ENCODE measurements at regions of chr11 and their contacts with region 1.

Region 1: GRCh38 chr11:123407130-123407995 is 22.7 kb upstream of the GRAMD1B start:
- DNase-seq: peak; percentile 76
- H3K4me3 Mint-ChIP-seq: peak overlapping the region; percentile 33
- H3K27ac Mint-ChIP-seq: no peak overlapping the region
- H3K4me1 Mint-ChIP-seq: peaks cover 35% of the 10 kb centered on the region
- H3K27me3 Mint-ChIP-seq: peaks cover 9% of the 10 kb centered on the region

Region 2: DNA sequence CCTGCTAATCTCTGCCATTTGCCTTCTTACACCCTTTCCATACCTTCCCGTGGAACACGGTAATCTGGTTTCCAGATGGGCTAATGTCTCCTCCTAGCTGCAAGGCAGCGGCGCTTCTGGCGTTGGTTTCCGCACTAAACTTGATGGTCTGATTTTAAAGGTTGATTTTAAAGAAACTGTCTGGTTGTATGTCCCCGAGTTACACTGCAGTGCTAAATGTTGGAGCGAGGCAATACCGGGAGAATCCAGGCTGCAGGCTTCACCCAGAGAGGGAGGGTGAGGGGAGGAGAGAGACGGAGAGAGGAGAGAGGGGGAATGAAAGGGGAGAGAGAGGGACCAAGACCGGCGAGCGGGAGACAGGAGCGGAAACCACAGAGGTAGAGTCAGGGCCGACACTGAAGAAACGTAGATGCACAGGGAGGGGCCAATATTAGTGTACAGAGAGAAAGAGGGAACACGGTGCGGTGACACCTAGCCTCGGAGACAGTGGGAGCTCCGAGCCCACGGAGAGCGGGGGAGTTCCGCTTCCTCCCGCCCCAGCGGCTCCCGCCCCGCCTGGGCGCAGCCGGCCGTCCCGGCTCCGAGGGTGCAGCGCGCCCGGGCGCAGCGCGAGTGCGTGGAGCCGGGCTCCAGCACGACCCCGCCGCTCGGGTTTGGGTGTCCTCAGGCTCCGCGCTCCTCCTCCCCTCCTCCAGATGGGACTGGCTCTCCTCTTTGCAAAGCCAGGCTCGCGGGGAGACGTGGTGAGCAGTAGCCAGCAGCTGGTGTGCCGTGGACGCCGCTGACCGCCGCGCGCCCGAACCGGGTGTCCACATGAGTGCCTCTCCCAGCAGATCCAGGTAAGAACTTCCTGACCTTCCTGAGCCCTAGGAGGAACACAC is 49.2 kb before region 1 on chr11:
- CTCF ChIA-PET with region 1: interaction called, 14 read pairs
- DNase-seq: peak; percentile 66
- H3K4me3 Mint-ChIP-seq: peak overlapping the region; percentile 81
- H3K27ac Mint-ChIP-seq: peak overlapping the region; percentile 78
- H3K4me1 Mint-ChIP-seq: peaks cover 51% of the 10 kb centered on the region
- H3K27me3 Mint-ChIP-seq: peaks cover 42% of the 10 kb centered on the region

Region 3: DNA sequence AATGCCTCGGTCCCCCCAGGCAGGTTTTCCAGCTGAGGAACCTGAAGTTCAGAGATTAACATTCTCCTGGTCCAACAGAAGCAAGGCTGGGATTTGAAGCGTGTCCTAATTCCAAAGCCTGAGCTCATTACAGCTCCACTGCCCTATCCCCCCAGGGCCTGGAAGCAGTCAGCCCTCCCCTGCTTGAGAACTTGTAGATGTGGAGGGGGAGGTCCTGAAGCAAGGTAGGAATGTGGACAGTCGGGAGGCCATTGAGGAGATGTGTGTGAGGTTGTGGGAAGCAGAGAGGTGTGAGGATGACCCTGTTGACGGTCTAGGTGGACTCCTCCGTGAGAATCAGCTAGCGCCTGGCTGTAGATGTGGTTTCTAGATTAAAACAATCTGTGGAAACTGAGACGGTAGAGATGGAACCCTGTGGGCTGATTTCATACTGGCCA is 30.8 kb after region 1 on chr11:
- CTCF ChIA-PET with region 1: interaction called, 86 read pairs
- DNase-seq: no peak
- H3K4me3 Mint-ChIP-seq: no peak overlapping the region
- H3K27ac Mint-ChIP-seq: peak overlapping the region; percentile 62
- H3K4me1 Mint-ChIP-seq: peaks cover 86% of the 10 kb centered on the region
- H3K27me3 Mint-ChIP-seq: no peaks in the 10 kb centered on the region

Region 4: DNA sequence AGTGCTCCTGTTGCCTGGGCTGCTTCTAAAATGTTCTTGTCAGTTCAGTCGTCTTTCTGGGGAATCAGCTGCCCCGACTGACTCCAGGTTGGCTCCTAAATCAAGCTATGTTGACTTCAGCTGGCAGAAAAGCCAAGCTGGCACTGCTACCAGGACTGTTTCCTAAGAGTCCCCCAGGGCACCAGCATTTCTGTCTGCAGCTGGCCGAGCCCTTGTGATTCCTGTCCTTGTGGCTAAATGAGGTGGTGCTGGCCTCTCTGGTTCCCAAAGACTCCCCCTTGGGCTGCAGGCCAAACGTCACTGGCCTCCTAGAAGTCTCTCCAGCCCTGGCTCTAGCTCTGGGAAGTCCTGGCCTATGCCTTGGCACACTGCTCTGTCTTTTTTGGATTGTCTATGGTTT is 53.8 kb after region 1 on chr11:
- CTCF ChIA-PET with region 1: interaction called, 10 read pairs
- DNase-seq: no peak
- H3K4me3 Mint-ChIP-seq: no peak overlapping the region
- H3K27ac Mint-ChIP-seq: no peak overlapping the region
- H3K4me1 Mint-ChIP-seq: peaks cover 37% of the 10 kb centered on the region
- H3K27me3 Mint-ChIP-seq: no peaks in the 10 kb centered on the region

Region 5: GRCh38 chr11:123560006-123560405 is 152.6 kb after region 1 on chr11:
- CTCF ChIA-PET with region 1: interaction called, 12 read pairs
- DNase-seq: peak; percentile 65
- H3K4me3 Mint-ChIP-seq: peak overlapping the region; percentile 45
- H3K27ac Mint-ChIP-seq: peak overlapping the region; percentile 42
- H3K4me1 Mint-ChIP-seq: peaks cover 19% of the 10 kb centered on the region
- H3K27me3 Mint-ChIP-seq: peaks cover 16% of the 10 kb centered on the region